ENCODE measurements at regions of chr19 and their contacts with region 1.

Region 1: DNA sequence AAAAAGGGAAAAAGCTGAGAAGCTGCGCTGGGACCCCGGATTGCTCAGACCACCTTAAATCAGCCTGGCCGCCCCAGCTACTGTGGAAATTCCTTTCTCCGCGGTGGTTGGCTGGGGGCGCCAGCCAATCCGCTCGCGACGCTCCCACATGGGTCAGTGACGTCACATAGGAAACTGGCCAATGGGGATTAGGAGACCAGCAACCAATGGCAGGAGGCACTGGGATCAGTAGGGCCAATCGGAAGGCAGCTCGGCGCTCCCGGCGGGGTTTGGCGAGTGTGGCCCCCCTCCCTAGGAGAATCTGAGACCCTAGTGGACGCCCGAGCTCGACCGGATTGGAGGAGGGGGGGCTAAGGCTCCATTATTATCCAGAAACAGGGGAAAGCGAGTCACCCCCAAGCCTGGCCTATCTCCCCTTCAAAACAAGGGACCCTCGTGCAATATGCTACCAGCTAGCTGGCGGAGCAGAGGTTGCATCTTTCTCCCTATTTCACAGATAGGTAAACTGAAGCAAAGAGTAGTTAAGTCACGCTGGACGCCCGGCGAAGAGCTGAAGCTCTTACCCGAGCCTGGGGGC is 6.5 kb upstream of the TLE2 start:
- DNase-seq: peak; percentile 98
- ATAC-seq: peak; percentile 95

Region 2: DNA sequence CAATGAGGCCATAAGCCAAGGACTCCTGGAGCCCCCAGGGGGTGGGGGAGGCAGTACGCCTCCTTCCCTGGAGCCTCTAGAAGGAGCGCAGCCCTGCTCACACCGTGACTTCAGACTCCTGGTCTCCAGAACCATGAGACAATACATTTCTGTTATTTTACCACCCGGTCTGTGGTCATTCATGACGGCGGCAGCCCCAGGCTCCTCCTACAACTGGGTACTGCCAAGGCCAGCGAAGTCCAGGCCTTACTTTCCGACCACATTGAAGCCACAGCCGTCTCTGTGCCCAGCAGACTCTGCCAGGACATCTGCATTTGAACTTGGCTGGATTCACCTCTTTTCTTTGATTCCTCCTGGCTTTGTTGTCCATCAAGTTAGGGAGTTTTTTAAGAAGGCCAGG is 343.7 kb before region 1 on chr19:
- intact Hi-C with region 1: no loop called
- DNase-seq: no peak
- ATAC-seq: no peak

Region 3: GRCh38 chr19:2969104-2969504 is 66.5 kb before region 1 on chr19:
- intact Hi-C with region 1: loop called (anchors 2 kb)
- DNase-seq: no peak
- ATAC-seq: peak; percentile 57

Region 4: GRCh38 chr19:2983351-2984195 is 52.1 kb before region 1 on chr19:
- intact Hi-C with region 1: loop called (anchors 2 kb)
- DNase-seq: peak; percentile 82
- ATAC-seq: peak; percentile 58

Region 5: GRCh38 chr19:3057306-3057714 is 21.7 kb after region 1 on chr19:
- intact Hi-C with region 1: loop called (anchors 1 kb)
- DNase-seq: peak; percentile 94
- ATAC-seq: peak; percentile 78

Region 6: GRCh38 chr19:3062168-3063102 is 26.8 kb after region 1 on chr19 and contains the start of gene TLE5:
- intact Hi-C with region 1: loop called (anchors 1 kb)
- DNase-seq: peak; percentile 87
- ATAC-seq: peak; percentile 58
- total RNA-seq, gene TLE5: 775 TPM

Region 7: GRCh38 chr19:3080301-3081026 is 44.8 kb after region 1 on chr19:
- intact Hi-C with region 1: no loop called
- DNase-seq: peak; percentile 47
- ATAC-seq: no peak

Region 8: GRCh38 chr19:3365836-3366752 is 330.5 kb after region 1 on chr19 and contains the start of gene NFIC:
- intact Hi-C with region 1: no loop called
- DNase-seq: peak; percentile 91
- ATAC-seq: peak; percentile 76
- total RNA-seq, gene NFIC: 164 TPM